ENCODE measurements at regions of chr1 and their contacts with region 1.

Region 1: GRCh38 chr1:186985889-186986491 is 157.2 kb downstream of the PLA2G4A start:
- DNase-seq: peak; percentile 53
- H3K4me3 ChIP-seq: no peak overlapping the region
- H3K27ac ChIP-seq: peak overlapping the region; percentile 29
- H3K27me3 ChIP-seq: no peaks in the 10 kb centered on the region
- CTCF ChIP-seq: peak; percentile 61

Region 2: GRCh38 chr1:186482661-186483255 is 503.2 kb before region 1 on chr1:
- in situ Hi-C with region 1: loop called (anchors 25 kb)
- DNase-seq: peak; percentile 73
- H3K4me3 ChIP-seq: no peak overlapping the region
- H3K27ac ChIP-seq: no peak overlapping the region
- H3K27me3 ChIP-seq: no peaks in the 10 kb centered on the region
- CTCF ChIP-seq: peak; percentile 96

Region 3: DNA sequence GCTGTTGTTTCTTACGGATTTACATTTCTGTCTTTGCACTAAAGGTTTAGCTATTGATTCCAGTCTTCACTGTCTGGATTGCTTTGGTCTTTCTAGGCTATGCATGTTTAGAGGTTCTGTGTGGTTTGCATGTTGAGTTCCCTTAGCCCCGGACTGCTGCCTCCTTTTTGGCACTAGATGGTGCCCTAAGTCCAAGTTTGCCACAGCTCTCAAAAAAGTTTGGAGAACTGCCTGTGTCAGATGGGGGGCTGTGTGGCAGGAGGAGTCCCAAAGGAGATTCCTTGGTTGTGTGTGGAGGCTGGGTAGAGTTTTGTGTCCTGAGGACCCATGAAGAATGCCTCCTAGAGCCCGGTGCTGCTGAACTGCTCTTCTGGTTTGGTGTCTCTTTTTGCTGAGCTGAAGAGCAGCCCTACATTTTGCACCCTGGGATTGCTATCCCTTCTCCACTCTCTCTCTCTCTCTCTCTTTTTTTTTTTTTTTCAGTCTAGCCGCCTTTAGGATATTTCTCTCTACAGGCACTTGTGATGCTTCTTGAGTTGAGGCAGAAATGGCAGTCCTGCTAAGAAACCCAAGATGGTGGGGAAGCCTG is 380.1 kb before region 1 on chr1:
- in situ Hi-C with region 1: loop called (anchors 25 kb)
- DNase-seq: peak; percentile 77
- H3K4me3 ChIP-seq: no peak overlapping the region
- H3K27ac ChIP-seq: no peak overlapping the region
- H3K27me3 ChIP-seq: no peaks in the 10 kb centered on the region
- CTCF ChIP-seq: peak; percentile 93